Colonic mucosa (tissue), 4 donors: ENCODE measurements at regions of chr6 and their contacts with region 1.

Region 1: GRCh38 chr6:3742426-3743344 is 8.8 kb downstream of the PXDC1 start:
- DNase-seq: peak; percentile 93
- H3K4me3 ChIP-seq: no peak overlapping the region
- H3K27ac ChIP-seq: peak overlapping the region; percentile 37
- H3K4me1 ChIP-seq: no peaks in the 10 kb centered on the region
- H3K27me3 ChIP-seq: no peaks in the 10 kb centered on the region
- CTCF ChIP-seq: peak; percentile 86

Region 2: DNA sequence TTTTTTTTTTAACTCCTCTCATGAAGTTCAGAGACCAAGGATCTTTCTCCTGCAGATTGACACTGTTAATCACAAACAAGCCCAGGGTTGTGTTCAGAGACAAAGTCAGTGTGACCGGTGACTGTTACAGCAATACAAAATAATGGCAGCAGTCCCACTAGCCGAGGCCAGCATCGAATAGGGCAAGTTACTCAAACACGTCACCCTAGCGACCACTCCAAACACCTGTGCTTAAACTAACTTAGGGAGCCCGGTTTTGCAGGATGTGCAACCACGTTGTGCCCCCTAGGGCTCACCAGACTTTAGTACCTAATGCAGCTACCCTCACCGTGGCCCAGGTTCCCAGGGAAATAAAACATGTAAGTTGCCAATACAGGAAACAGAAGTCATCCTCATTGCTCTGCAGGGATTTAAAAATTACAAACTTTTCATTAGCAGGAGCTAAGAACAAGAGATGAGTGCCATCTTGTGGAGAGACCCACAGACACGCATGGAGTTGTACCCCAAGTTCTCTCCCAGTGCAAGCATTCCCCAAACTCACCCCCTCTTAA is 144.5 kb after region 1 on chr6:
- intact Hi-C with region 1: loop called (anchors 5 kb)
- DNase-seq: no peak
- H3K4me3 ChIP-seq: no peak overlapping the region
- H3K27ac ChIP-seq: no peak overlapping the region
- H3K4me1 ChIP-seq: no peaks in the 10 kb centered on the region
- H3K27me3 ChIP-seq: no peaks in the 10 kb centered on the region
- CTCF ChIP-seq: peak; percentile 28

Region 3: GRCh38 chr6:4085332-4085700 is 342.6 kb after region 1 on chr6:
- intact Hi-C with region 1: no loop called
- DNase-seq: no peak
- H3K4me3 ChIP-seq: no peak overlapping the region
- H3K27ac ChIP-seq: no peak overlapping the region
- H3K4me1 ChIP-seq: no peaks in the 10 kb centered on the region
- H3K27me3 ChIP-seq: no peaks in the 10 kb centered on the region
- CTCF ChIP-seq: no peak

Region 4: GRCh38 chr6:4155848-4156466 is 413.3 kb after region 1 on chr6:
- intact Hi-C with region 1: loop called (anchors 10 kb)
- DNase-seq: peak; percentile 86
- H3K4me3 ChIP-seq: no peak overlapping the region
- H3K27ac ChIP-seq: no peak overlapping the region
- H3K4me1 ChIP-seq: no peaks in the 10 kb centered on the region
- H3K27me3 ChIP-seq: no peaks in the 10 kb centered on the region
- CTCF ChIP-seq: peak; percentile 87